Activated naive CD4-positive, alpha-beta T cell treated with anti-CD3 and anti-CD28 coated beads for 36 hours (primary cell): ENCODE measurements at regions of chr21 and their contacts with region 1.

Region 1: GRCh38 chr21:29002442-29003144 is 9.9 kb upstream of the LTN1 start:
- DNase-seq: peak; percentile 96
- H3K4me3 Mint-ChIP-seq: peak overlapping the region; percentile 89
- H3K27ac Mint-ChIP-seq: peak overlapping the region; percentile 95
- H3K4me1 Mint-ChIP-seq: peaks cover 6% of the 10 kb centered on the region
- H3K27me3 Mint-ChIP-seq: no peaks in the 10 kb centered on the region

Region 2: GRCh38 chr21:28554660-28555475 is 447.7 kb before region 1 on chr21:
- CTCF ChIA-PET with region 1: no interaction called
- intact Hi-C with region 1: no loop called
- DNase-seq: no peak
- H3K4me3 Mint-ChIP-seq: no peak overlapping the region
- H3K27ac Mint-ChIP-seq: no peak overlapping the region
- H3K4me1 Mint-ChIP-seq: no peaks in the 10 kb centered on the region
- H3K27me3 Mint-ChIP-seq: no peaks in the 10 kb centered on the region

Region 3: GRCh38 chr21:28754127-28754611 is 248.4 kb before region 1 on chr21:
- CTCF ChIA-PET with region 1: no interaction called
- intact Hi-C with region 1: no loop called
- DNase-seq: no peak
- H3K4me3 Mint-ChIP-seq: no peak overlapping the region
- H3K27ac Mint-ChIP-seq: no peak overlapping the region
- H3K4me1 Mint-ChIP-seq: no peaks in the 10 kb centered on the region
- H3K27me3 Mint-ChIP-seq: no peaks in the 10 kb centered on the region

Region 4: DNA sequence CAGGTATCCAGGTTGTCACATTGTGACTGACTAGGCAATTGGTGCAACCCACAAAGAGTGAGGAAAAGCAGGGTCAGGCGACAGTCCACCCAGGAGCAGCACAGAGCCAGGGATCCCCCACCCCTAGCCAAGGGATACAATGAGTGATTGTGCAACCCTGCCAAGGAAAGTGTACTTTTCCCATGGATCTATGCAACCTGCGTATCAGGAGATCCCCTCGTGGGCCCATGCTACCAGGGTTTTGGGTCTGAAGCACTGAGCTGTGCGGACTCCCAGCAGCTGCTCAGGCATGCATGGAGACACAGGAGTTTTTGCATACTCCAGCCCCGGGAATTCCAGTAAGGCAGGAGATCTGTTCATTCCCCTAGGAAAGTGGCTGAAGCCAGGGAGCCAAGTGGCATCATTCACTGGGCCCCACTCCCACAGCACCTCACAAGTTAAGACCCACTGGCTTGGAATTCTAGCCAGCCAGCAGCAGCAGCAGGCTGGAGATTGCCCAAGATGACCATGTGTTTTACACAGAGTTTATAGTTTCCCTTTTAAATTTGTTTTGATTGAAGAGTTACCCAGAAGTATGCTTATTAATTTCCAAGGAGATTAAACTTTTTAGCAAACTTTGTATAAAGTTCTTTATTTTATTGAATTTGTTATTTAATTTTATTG is 145.9 kb before region 1 on chr21:
- CTCF ChIA-PET with region 1: no interaction called
- intact Hi-C with region 1: no loop called
- DNase-seq: no peak
- H3K4me3 Mint-ChIP-seq: no peak overlapping the region
- H3K27ac Mint-ChIP-seq: no peak overlapping the region
- H3K4me1 Mint-ChIP-seq: peaks cover 2% of the 10 kb centered on the region
- H3K27me3 Mint-ChIP-seq: no peaks in the 10 kb centered on the region

Region 5: DNA sequence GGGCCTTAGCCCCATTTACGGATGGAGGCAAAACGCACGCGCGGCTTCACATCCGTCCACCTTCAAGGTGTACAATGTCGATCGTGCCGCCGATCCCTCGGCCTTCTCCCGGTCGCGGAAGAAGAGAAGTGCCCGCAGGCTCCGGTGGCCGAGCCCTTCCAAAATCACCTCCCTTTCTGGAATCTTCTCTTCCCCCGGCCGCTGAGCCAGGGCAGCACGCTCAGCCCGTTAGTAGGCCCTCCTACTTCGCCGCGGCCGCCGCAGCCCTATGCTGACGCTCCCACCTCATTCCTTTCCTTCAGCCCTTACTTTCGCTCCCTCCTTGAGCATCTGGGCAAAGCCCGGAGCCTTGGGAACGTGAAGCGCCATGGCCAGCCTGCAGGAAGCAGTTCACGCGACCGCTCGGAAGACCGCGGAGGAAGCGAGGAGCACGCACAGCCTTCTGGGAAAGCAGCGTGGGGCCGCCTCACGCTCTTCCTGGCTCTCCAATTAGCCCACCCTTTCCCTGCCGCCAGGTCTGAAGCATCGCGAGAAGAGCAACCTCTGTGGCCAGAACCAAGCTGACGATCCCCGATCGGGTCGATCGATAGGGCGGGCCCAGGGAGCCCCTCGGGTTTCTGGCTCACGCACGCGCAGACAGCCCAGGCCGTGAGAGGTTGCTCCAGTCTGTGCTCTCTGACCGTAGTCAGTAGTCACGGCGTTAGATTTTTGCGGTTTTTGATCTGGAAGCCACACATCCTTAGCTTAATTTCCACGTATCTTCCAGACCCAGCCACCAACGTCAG is 70.8 kb after region 1 on chr21 and contains the start of gene CCT8:
- CTCF ChIA-PET with region 1: interaction called, 3 read pairs
- intact Hi-C with region 1: loop called (anchors 1 kb)
- DNase-seq: peak; percentile 99
- H3K4me3 Mint-ChIP-seq: peak within 1 kb of the TSS; percentile 94
- H3K27ac Mint-ChIP-seq: peak within 1 kb of the TSS; percentile 95
- H3K4me1 Mint-ChIP-seq: peaks cover 46% of the 10 kb centered on the region
- H3K27me3 Mint-ChIP-seq: no peaks in the 10 kb centered on the region
- total RNA-seq, gene CCT8: 482 to 515 TPM

Region 6: GRCh38 chr21:29091032-29091431 is 88.4 kb after region 1 on chr21:
- CTCF ChIA-PET with region 1: no interaction called
- intact Hi-C with region 1: no loop called
- DNase-seq: no peak
- H3K4me3 Mint-ChIP-seq: no peak overlapping the region
- H3K27ac Mint-ChIP-seq: no peak overlapping the region
- H3K4me1 Mint-ChIP-seq: peaks cover 5% of the 10 kb centered on the region
- H3K27me3 Mint-ChIP-seq: no peaks in the 10 kb centered on the region